A549 (cell line): ENCODE measurements at regions of chr17 and their contacts with region 1.

Region 1: DNA sequence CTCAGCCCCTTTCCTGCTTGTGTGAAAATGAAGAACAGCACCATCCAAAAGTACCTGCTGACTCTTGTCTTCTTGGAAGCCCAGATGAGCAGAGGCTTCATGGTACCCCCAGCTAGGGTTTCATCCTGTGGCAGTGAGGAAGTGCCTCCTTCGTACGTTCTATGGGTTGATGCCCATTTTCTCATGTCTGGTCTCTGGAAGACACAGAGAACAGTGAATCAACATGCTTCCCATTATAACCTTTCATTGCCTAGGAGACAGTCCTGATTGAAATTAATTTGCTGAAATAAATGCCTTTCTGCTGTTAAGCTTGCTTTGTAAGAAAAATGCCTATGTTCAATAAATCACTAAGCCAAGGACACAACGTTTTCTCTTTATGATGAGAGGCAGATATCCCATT is 36.5 kb downstream of the RCVRN start:
- DNase-seq: no peak
- ATAC-seq: no peak
- H3K4me3 ChIP-seq: no peak overlapping the region
- H3K27ac ChIP-seq: no peak overlapping the region
- H3K4me1 ChIP-seq: peaks cover 12% of the 10 kb centered on the region; the same call in 1 of the 3 replicates
- CTCF ChIP-seq: no peak
- EP300 ChIP-seq: no peak
- POLR2A ChIP-seq: no peak
- RAD21 ChIP-seq: no peak

Region 2: GRCh38 chr17:9850151-9850550 is 18.4 kb before region 1 on chr17:
- CTCF ChIA-PET with region 1: interaction called, 15 read pairs
- POLR2A ChIA-PET with region 1: no interaction called
- DNase-seq: no peak
- ATAC-seq: no peak
- H3K4me3 ChIP-seq: no peak overlapping the region
- H3K27ac ChIP-seq: peak overlapping the region in 1 of 2 experiments; percentile 48; a peak in 2 of 6 replicates
- H3K4me1 ChIP-seq: peaks cover 6% of the 10 kb centered on the region; the same call in 1 of the 3 replicates
- CTCF ChIP-seq: no peak
- EP300 ChIP-seq: no peak
- POLR2A ChIP-seq: no peak
- RAD21 ChIP-seq: no peak